ENCODE measurements at regions of chr2 and their contacts with region 1.

Region 1: GRCh38 chr2:32063310-32064161 is at the start of gene SPAST:
- DNase-seq: peak; percentile 95

Region 2: DNA sequence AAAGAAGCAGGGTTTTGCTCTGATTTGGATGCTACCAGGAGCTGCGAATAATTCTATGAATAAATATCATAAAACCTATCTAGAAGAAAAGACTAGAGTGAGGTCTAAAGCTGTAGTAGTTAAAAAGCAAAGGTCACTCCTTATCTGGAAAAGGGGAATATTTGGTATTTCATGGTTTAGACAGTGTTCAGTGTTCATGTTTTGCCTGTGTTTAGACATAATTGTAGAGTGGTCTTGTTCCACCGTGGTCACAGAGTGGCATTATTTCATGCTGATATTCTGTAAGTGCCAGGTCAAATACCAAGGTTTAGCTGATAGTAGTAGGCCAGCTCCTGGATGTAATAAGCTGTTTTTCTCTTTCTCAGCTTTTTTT is 10.6 kb after region 1 on chr2:
- CTCF ChIA-PET with region 1: interaction called, 3 read pairs
- POLR2A ChIA-PET with region 1: interaction called, 22 read pairs
- DNase-seq: no peak

Region 3: GRCh38 chr2:32166115-32166574 is 102.6 kb after region 1 on chr2:
- CTCF ChIA-PET with region 1: no interaction called
- POLR2A ChIA-PET with region 1: interaction called, 23 read pairs
- DNase-seq: no peak

Region 4: DNA sequence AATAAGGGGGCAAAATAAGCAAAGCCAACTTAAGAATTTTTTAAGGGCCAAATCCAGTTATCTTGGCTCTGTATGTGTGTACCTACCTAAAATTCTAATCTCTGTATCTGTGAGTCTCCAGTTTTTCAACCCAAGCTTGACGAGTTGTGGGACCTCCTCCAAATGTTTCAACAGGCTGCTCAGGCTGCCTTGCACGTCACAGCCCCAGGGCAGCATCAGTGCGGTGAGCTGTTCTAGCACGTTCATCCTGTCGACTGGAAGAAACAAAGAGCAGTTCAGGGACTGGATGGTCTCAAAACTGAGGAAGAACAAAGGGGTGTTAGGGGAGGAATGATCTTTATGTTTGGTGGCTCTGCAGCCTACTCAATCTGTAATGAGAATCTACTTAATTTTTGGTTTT is 171.8 kb after region 1 on chr2:
- CTCF ChIA-PET with region 1: no interaction called
- POLR2A ChIA-PET with region 1: no interaction called
- DNase-seq: no peak

Region 5: DNA sequence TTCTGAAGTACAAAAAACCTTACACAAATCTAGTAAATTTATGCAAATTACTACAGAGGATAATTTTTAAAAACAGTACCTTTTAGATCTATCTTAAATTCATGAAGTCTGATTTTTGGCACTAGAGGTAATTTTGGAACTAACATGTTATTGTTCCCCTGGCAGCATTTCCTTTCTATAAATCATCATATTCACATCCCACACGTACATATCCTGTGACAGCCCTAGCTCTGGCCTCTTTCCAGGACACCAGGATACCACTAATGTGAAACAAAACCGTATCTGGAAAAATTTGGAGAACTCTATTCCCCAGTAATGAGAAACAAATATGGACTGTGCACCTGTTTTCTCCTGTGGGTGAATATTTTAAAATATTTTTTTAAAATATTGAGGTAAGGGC is 279.3 kb after region 1 on chr2:
- CTCF ChIA-PET with region 1: no interaction called
- POLR2A ChIA-PET with region 1: no interaction called
- DNase-seq: no peak